Activated naive CD4-positive, alpha-beta T cell treated with anti-CD3 and anti-CD28 coated beads for 36 hours (primary cell): ENCODE measurements at regions of chrX and their contacts with region 1.

Region 1: DNA sequence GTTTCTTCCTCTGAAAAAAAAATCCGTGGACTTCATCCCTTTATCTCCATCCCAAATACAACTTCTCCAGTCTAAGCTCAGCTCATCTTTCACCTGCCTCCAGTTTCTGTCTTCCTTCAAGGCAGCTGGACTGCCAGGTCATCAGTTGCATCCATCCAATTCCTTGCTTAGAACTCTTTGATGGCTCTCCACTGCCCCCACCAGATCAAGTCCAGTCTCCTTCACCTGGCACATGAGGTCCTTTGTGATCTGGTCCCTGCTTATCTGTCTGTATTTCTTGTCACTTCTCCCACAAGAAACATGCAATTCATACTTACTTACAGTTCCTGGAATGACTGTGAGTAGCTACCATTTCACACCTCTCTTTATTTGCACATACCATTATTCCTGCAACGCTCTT is 33.8 kb downstream of the OTUD6A start:
- DNase-seq: peak; percentile 5
- H3K4me3 Mint-ChIP-seq: no peak overlapping the region
- H3K27ac Mint-ChIP-seq: no peak overlapping the region
- H3K4me1 Mint-ChIP-seq: no peaks in the 10 kb centered on the region
- H3K27me3 Mint-ChIP-seq: peaks cover 5% of the 10 kb centered on the region

Region 2: DNA sequence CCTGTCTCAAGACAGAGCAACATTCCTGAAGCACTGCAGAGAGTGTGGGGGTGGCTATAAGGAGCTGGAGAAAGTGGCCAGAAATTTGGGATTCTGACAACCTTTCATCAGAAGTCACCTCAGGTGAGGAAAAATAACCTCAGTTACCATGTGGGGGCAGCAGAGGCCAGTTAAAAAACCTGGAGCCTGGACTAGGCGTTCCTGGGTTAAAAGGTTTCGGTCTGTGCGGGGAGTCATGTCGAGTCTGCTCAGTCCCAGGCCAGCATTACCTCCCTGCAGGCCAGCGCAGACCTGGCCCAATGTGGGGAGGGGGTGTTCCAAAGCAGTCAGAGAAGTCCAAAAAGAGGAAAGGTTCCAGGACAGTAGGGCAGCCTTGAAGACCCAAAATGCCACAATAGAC is 602.9 kb before region 1 on chrX:
- CTCF ChIA-PET with region 1: interaction called, 6 read pairs
- intact Hi-C with region 1: loop called (anchors 2 kb)
- DNase-seq: peak; percentile 54
- H3K4me3 Mint-ChIP-seq: no peak overlapping the region
- H3K27ac Mint-ChIP-seq: no peak overlapping the region
- H3K4me1 Mint-ChIP-seq: no peaks in the 10 kb centered on the region
- H3K27me3 Mint-ChIP-seq: peaks cover 10% of the 10 kb centered on the region

Region 3: GRCh38 chrX:69538321-69538876 is 557.7 kb before region 1 on chrX:
- CTCF ChIA-PET with region 1: interaction called, 16 read pairs
- intact Hi-C with region 1: loop called (anchors 2 kb)
- DNase-seq: peak; percentile 79
- H3K4me3 Mint-ChIP-seq: peak overlapping the region; percentile 43
- H3K27ac Mint-ChIP-seq: no peak overlapping the region
- H3K4me1 Mint-ChIP-seq: peaks cover 10% of the 10 kb centered on the region
- H3K27me3 Mint-ChIP-seq: peaks cover 2% of the 10 kb centered on the region

Region 4: GRCh38 chrX:70168238-70169188 is 72.5 kb after region 1 on chrX:
- CTCF ChIA-PET with region 1: no interaction called
- intact Hi-C with region 1: no loop called
- DNase-seq: no peak
- H3K4me3 Mint-ChIP-seq: no peak overlapping the region
- H3K27ac Mint-ChIP-seq: no peak overlapping the region
- H3K4me1 Mint-ChIP-seq: peaks cover 5% of the 10 kb centered on the region
- H3K27me3 Mint-ChIP-seq: no peaks in the 10 kb centered on the region

Region 5: DNA sequence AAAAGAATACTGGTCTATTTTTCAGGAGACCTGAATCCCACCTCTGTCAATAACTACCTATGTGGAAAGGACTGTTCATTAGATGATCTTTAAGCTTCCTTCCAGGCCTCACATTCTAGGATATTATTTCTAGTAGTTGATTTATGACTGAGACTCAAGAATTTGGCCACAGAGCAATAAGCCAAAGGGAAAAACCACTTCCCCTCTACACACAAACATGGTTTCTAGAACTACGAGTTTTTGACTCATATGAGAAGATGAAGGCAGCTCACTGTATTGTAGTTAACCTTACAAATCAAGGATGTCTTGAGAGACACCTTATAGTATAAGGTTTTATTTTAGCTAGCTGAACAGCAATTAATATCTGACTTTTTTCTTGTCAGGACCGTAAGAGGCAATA is 290.2 kb after region 1 on chrX:
- CTCF ChIA-PET with region 1: no interaction called
- intact Hi-C with region 1: no loop called
- DNase-seq: no peak
- H3K4me3 Mint-ChIP-seq: no peak overlapping the region
- H3K27ac Mint-ChIP-seq: no peak overlapping the region
- H3K4me1 Mint-ChIP-seq: no peaks in the 10 kb centered on the region
- H3K27me3 Mint-ChIP-seq: no peaks in the 10 kb centered on the region